ENCODE measurements at regions of chr1 and their contacts with region 1.

Region 1: DNA sequence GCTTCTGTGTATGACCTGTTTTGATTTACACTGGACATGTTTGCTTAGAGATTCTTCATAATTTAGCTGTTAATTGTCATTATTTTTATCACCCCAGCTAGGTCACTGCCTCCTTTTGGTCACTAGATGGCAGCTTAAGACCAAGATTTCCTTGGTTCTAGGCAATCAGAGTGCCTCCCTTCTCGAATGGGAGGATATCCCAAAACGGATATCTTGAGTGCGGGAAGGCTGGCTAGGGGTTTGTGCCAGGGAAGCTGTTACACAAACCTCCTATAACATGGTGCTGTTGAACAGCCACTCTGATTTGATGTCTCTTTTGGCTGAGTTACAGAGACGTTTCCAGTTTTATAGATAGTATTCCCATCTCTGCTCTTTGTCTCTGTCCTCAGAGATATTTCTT is 283.5 kb downstream of the S1PR1 start:
- DNase-seq: peak; percentile 28
- H3K4me3 Mint-ChIP-seq: no peak overlapping the region
- H3K27ac Mint-ChIP-seq: no peak overlapping the region
- H3K4me1 Mint-ChIP-seq: peaks cover 2% of the 10 kb centered on the region
- H3K27me3 Mint-ChIP-seq: no peaks in the 10 kb centered on the region

Region 2: DNA sequence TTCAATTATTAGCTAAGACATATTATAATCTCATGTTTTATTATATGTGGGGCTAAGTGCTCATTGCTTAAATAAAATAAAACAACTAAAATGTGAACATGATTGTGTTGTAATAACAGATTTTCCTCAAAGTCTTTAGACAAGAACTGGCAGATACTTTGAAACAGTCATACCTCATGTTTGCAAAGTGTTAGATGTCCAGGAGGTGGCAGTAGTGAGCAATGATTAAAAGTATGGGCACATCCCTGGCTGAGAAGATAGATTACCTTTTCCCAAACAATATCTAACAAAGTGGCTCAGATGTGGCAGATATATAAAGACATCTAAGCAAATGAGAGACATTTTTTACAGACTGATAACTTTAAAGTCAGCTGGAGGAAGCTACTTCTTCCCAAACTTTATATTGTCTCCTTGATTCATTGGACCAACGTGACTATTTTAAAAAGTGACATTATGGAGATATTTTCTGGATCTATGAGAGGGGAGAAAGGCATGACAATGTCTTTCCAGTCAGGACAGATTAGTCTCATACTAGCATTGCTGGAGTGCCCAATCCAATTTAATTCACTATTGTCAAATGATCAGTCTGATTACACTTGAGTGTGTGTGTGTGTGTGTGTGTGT is 13.6 kb before region 1 on chr1:
- CTCF ChIA-PET with region 1: interaction called, 18 read pairs
- intact Hi-C with region 1: no loop called
- DNase-seq: peak; percentile 60
- H3K4me3 Mint-ChIP-seq: no peak overlapping the region
- H3K27ac Mint-ChIP-seq: no peak overlapping the region
- H3K4me1 Mint-ChIP-seq: no peaks in the 10 kb centered on the region
- H3K27me3 Mint-ChIP-seq: no peaks in the 10 kb centered on the region

Region 3: DNA sequence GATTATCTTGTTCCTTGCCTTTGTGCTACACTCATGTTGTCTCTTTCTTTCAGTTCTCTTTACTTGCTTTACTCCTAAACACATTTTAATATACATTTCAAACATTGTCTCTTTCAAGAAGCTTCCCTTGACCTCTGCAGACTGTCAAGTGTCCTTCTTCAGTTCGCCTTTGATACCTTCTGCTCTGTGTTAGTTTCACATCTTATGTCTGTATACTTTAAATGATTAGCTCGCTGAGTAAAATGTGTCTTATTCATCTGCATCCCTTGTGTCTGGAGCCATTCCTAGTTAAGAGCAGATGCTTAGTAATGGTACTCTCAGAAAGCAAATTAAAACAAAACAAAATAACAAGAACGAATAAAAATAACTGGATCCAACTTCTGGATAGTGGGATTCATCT is 19.9 kb after region 1 on chr1:
- CTCF ChIA-PET with region 1: interaction called, 10 read pairs
- intact Hi-C with region 1: no loop called
- DNase-seq: no peak
- H3K4me3 Mint-ChIP-seq: no peak overlapping the region
- H3K27ac Mint-ChIP-seq: no peak overlapping the region
- H3K4me1 Mint-ChIP-seq: no peaks in the 10 kb centered on the region
- H3K27me3 Mint-ChIP-seq: peaks cover 6% of the 10 kb centered on the region

Region 4: DNA sequence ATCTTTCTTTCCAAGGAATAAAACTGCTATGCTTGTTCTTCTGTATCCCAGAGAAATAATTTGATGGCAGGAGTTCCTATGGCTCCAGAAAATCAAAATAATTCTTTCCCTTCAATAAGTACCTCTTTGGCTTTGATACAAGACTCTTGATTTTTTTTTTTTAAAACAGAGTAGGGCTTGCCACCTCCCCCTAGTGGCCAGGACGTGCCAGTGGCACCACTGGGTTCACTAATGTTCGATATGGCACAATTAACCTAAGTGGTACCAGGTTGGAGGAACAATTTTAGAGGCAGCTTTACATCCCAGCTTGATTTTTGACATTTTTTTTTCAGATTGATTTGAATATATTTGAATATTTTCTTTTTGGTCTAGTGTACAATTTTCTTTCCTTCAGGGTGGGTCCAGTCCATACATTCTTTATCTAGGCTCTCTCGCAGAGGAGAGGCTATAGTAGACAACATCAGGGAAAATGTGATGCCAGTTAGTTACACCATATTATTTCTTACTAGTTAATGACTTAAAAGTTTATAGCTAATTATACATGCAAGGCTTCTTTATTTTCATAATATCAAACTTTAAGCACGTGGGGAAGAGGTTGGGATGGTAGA is 47.4 kb after region 1 on chr1:
- CTCF ChIA-PET with region 1: interaction called, 8 read pairs
- intact Hi-C with region 1: loop called (anchors 1 kb)
- DNase-seq: peak; percentile 64
- H3K4me3 Mint-ChIP-seq: no peak overlapping the region
- H3K27ac Mint-ChIP-seq: no peak overlapping the region
- H3K4me1 Mint-ChIP-seq: peaks cover 3% of the 10 kb centered on the region
- H3K27me3 Mint-ChIP-seq: peaks cover 2% of the 10 kb centered on the region

Region 5: DNA sequence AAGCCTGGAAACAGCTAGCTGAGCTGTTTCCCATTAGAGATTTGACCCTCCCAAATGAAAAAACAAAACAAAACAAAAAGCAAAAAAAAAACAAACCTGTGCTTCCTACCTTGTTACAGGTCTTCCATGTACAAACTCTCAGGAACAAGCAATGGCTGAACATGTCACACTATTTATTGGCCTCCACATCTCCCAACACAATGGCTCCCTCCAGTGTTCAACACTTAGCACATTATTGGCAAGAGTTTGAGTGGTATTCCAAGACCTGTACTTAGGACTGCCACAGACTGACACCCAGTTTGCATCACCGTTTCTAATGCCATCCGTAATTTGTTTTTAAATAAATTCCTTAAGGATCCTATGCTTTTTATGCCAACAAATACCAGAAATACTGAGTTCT is 671.4 kb after region 1 on chr1:
- CTCF ChIA-PET with region 1: no interaction called
- intact Hi-C with region 1: loop called (anchors 2 kb)
- DNase-seq: peak; percentile 13
- H3K4me3 Mint-ChIP-seq: no peak overlapping the region
- H3K27ac Mint-ChIP-seq: no peak overlapping the region
- H3K4me1 Mint-ChIP-seq: no peaks in the 10 kb centered on the region
- H3K27me3 Mint-ChIP-seq: no peaks in the 10 kb centered on the region

Region 6: DNA sequence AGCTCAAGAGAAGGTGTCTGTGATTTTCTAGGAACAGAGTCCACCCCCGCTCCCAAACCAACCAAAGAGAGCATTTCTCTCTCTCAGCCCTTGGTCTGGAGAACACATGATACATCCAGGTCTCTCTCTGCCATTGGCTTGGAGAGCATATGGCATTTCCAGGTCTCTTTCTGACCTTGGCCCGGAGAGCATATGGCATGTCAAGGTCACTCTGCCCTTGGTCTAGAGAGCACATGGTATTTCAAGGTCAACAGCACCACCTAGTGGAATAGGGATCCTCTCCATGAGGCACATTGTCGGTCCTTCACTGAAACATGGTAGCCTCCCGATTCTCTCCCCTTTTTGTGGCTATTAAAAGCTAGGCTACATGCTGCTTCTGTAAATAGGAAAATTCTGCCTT is 914.1 kb after region 1 on chr1:
- CTCF ChIA-PET with region 1: no interaction called
- intact Hi-C with region 1: loop called (anchors 2 kb)
- DNase-seq: peak; percentile 14
- H3K4me3 Mint-ChIP-seq: no peak overlapping the region
- H3K27ac Mint-ChIP-seq: no peak overlapping the region
- H3K4me1 Mint-ChIP-seq: no peaks in the 10 kb centered on the region
- H3K27me3 Mint-ChIP-seq: no peaks in the 10 kb centered on the region

Region 7: GRCh38 chr1:102970498-102971078 is 1450.3 kb after region 1 on chr1:
- CTCF ChIA-PET with region 1: no interaction called
- intact Hi-C with region 1: loop called (anchors 5 kb)
- DNase-seq: peak; percentile 6
- H3K4me3 Mint-ChIP-seq: no peak overlapping the region
- H3K27ac Mint-ChIP-seq: no peak overlapping the region
- H3K4me1 Mint-ChIP-seq: no peaks in the 10 kb centered on the region
- H3K27me3 Mint-ChIP-seq: no peaks in the 10 kb centered on the region